ENCODE measurements at regions of chr22 and their contacts with region 1.

Region 1: GRCh38 chr22:33605666-33606065 is 314.6 kb downstream of the LARGE1 start:
- DNase-seq: no peak
- ATAC-seq: peak; percentile 95

Region 2: GRCh38 chr22:33726294-33726734 is 120.6 kb after region 1 on chr22:
- intact Hi-C with region 1: loop called (anchors 5 kb)
- DNase-seq: no peak
- ATAC-seq: peak; percentile 68

Measured in Right ventricle myocardium inferior (tissue), 1 donor.